Left cardiac atrium (tissue), 4 donors: ENCODE measurements at regions of chr1 and their contacts with region 1.

Region 1: GRCh38 chr1:20521960-20522861 is 14.3 kb upstream of the MUL1 start:
- DNase-seq: peak; percentile 71
- ATAC-seq: peak; percentile 76 to 79

Region 2: DNA sequence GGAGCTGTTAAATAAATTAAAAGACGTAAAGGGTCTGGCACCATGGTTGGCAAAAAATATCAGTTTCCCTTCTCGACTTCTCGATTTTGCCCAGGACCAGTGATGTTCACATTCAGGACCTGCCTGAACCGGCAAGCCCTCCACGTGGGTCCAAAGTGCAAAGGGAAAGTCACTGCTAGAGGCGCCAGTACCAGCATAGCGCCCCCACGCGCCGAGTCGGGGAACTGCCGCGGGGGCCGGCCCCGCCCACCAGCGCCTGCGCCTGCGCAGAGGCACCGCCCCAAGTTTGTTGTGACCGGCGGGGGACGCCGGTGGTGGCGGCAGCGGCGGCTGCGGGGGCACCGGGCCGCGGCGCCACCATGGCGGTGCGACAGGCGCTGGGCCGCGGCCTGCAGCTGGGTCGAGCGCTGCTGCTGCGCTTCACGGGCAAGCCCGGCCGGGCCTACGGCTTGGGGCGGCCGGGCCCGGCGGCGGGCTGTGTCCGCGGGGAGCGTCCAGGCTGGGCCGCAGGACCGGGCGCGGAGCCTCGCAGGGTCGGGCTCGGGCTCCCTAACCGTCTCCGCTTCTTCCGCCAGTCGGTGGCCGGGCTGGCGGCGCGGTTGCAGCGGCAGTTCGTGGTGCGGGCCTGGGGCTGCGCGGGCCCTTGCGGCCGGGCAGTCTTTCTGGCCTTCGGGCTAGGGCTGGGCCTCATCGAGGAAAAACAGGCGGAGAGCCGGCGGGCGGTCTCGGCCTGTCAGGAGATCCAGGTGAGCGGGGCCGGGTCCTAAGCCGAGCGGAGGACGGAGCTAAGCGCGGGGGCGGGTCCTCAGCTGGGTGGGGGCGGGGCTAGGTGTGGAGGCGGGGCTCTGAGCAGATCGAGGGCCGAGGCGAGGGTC is 111.2 kb after region 1 on chr1 and contains the start of gene PINK1:
- intact Hi-C with region 1: loop called in 1 of 2 experiments (anchors 2 kb)
- DNase-seq: peak; percentile 83
- ATAC-seq: peak; percentile 95 to 96
- total RNA-seq, gene PINK1: 126 to 149 TPM

Region 3: GRCh38 chr1:20640183-20640597 is 118.0 kb after region 1 on chr1:
- intact Hi-C with region 1: loop called in 1 of 2 experiments (anchors 2 kb)
- DNase-seq: no peak
- ATAC-seq: peak; percentile 36 to 70